GM12878 (cell line): ENCODE measurements at regions of chr6 and their contacts with region 1.

Region 1: DNA sequence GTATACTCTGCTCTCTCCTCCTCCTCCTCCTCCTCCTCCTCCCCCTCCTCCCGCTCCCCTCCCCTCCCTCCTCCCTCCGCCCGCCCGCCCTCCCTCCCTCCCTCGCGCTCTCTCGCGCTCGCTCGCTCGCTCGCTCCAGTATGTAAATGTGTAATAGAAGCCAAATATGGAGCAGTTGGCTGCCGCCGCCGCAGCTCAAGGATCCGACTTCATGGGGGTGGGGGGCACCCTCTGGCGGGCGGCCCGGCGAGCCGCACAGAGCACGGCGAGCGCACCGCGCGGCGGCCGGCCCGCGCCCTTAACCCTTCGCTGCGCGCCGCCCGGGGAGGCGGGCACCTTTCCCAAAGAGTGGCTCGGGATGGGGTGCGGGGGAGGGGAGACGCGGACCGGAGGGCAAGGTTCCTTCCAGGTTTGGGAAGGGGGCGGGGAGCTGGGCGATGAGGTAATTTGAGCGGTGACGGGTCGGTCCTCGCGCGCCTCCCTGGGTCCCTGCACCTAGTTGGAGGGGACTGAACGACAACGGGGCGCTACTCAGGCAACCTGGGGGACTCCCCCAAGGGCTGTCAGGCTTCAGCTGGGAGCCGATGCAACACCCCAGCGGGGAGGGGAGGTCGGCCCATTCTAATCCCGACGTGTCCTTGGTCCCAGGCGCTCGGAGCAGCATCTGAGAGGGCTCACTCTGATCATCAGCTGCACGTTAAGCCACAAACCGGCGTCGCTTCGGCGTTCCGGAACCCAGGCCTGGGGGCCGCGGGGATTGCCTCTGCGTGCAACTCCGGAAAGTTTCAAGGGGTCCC is 409 bp upstream of the ATXN1 start:
- DNase-seq: no peak
- ATAC-seq: peak; percentile 64
- H3K4me3 ChIP-seq: peak overlapping the region; percentile 80
- H3K27ac ChIP-seq: peak overlapping the region; percentile 68
- H3K4me1 ChIP-seq: peaks cover 8% of the 10 kb centered on the region; the same call in 1 of the 2 replicates
- H3K27me3 ChIP-seq: no peaks in the 10 kb centered on the region
- CTCF ChIP-seq: peak; percentile 24 to 48 (median 41); a peak in 3 of 6 replicates
- EP300 ChIP-seq: no peak; a peak in 1 of 4 replicates
- POLR2A ChIP-seq: peak; percentile 68
- RAD21 ChIP-seq: peak; percentile 64

Region 2: DNA sequence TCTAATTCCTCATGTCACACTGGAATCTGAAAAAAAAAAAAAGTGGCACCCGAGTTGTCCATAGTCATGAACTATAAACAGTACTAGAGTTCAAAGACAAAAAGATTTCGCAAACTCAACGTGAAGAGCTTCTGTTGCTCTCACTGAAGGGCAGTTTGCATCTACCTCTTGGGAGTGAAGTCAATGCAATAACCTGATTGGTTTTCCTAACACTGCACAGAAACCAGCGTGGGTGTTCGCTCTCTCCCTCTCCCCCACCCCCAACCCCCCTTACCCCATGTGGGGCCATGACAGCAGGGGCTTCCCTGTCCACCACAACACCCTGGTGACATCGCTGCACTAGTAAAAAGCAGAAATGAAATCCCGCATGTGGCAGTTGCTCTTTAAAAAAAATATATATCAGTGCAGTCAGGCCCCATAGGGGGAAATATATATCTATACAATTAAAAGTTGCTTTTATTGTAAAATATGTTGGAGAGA is 456.4 kb before region 1 on chr6:
- CTCF ChIA-PET with region 1: interaction called, 9 read pairs
- POLR2A ChIA-PET with region 1: no interaction called
- RAD21 ChIA-PET with region 1: interaction called, 4 read pairs
- SMC1A ChIA-PET with region 1: interaction called, 4 read pairs
- in situ Hi-C with region 1: no loop called
- intact Hi-C with region 1: loop called (anchors 10 kb)
- DNase-seq: peak; percentile 83
- ATAC-seq: peak; percentile 90
- H3K4me3 ChIP-seq: peak overlapping the region; percentile 53; the same call in 1 of the 2 replicates
- H3K27ac ChIP-seq: peak overlapping the region; percentile 75
- H3K4me1 ChIP-seq: peaks cover 32% of the 10 kb centered on the region
- H3K27me3 ChIP-seq: no peaks in the 10 kb centered on the region
- CTCF ChIP-seq: no peak
- EP300 ChIP-seq: peak; percentile 83 to 88
- POLR2A ChIP-seq: no peak
- RAD21 ChIP-seq: no peak

Region 3: DNA sequence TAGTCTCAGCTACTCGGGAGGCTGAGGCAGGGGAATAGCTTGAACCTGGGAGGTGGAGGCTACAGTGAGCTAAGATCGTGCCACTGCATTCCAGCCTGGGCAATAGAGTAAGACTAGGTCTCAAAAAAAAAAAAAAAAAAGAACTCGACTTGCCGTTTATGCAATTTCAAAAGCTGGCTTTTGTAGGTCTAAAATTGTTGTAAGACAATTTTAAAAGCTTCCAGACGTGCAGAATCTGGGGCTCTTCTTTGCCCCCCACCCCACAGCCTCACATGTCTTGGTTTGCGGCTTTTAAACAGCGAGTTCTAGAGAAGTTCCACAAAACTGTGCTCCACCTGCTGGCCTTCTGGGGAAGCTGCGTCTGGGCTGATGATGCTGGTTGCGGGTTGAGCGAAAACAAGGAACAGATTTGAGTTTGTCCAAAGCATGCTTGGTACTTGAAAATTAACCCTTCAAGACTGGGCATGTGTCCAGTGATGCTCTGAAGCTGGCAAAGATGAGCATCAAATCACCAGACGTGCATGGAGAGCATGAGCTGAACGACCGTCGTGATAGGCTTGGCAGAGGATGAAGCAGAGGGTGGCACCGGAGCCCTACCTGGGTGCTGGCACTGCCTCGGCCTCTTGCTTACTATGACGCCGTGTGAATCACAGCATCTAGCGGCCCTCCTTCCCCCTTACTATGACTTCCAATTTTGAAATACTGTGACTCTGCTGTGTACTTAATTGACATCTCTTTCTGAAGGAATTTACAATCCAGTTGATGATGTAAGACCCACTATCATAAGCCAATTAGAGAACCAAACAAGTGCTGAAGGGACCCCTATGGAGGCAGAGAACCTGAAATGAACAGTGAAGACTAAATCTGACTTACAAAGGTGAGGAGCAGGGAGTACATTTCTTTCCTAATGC is 351.9 kb before region 1 on chr6:
- CTCF ChIA-PET with region 1: interaction called, 25 read pairs
- POLR2A ChIA-PET with region 1: interaction called, 3 read pairs
- RAD21 ChIA-PET with region 1: interaction called, 37 read pairs
- SMC1A ChIA-PET with region 1: interaction called, 15 read pairs
- in situ Hi-C with region 1: loop called (anchors 10 kb)
- intact Hi-C with region 1: loop called (anchors 2 kb)
- DNase-seq: no peak
- ATAC-seq: peak; percentile 40
- H3K4me3 ChIP-seq: no peak overlapping the region
- H3K27ac ChIP-seq: no peak overlapping the region
- H3K4me1 ChIP-seq: peaks cover 11% of the 10 kb centered on the region
- H3K27me3 ChIP-seq: no peaks in the 10 kb centered on the region
- CTCF ChIP-seq: peak; percentile 60 to 86 (median 83)
- EP300 ChIP-seq: no peak
- POLR2A ChIP-seq: no peak
- RAD21 ChIP-seq: peak; percentile 79

Region 4: GRCh38 chr6:16494793-16495192 is 266.9 kb before region 1 on chr6:
- CTCF ChIA-PET with region 1: interaction called, 14 read pairs
- POLR2A ChIA-PET with region 1: interaction called, 6 read pairs
- RAD21 ChIA-PET with region 1: interaction called, 15 read pairs
- SMC1A ChIA-PET with region 1: interaction called, 12 read pairs
- in situ Hi-C with region 1: no loop called
- intact Hi-C with region 1: loop called (anchors 5 kb)
- DNase-seq: peak; percentile 90
- ATAC-seq: peak; percentile 75
- H3K4me3 ChIP-seq: peak overlapping the region; percentile 3; the same call in 1 of the 2 replicates
- H3K27ac ChIP-seq: peak overlapping the region; percentile 85
- H3K4me1 ChIP-seq: peaks cover 60% of the 10 kb centered on the region
- H3K27me3 ChIP-seq: no peaks in the 10 kb centered on the region
- CTCF ChIP-seq: no peak
- EP300 ChIP-seq: peak in 1 of 2 experiments; percentile 87; a peak in 3 of 4 replicates
- POLR2A ChIP-seq: no peak
- RAD21 ChIP-seq: no peak

Region 5: GRCh38 chr6:16602035-16602434 is 159.6 kb before region 1 on chr6:
- CTCF ChIA-PET with region 1: interaction called, 4 read pairs
- POLR2A ChIA-PET with region 1: interaction called, 3 read pairs
- RAD21 ChIA-PET with region 1: interaction called, 8 read pairs
- SMC1A ChIA-PET with region 1: interaction called, 11 read pairs
- in situ Hi-C with region 1: no loop called
- intact Hi-C with region 1: no loop called
- DNase-seq: peak; percentile 53
- ATAC-seq: peak; percentile 94
- H3K4me3 ChIP-seq: no peak overlapping the region
- H3K27ac ChIP-seq: no peak overlapping the region
- H3K4me1 ChIP-seq: peaks cover 32% of the 10 kb centered on the region
- H3K27me3 ChIP-seq: no peaks in the 10 kb centered on the region
- CTCF ChIP-seq: no peak
- EP300 ChIP-seq: peak; percentile 34 to 69; a peak in 2 of 4 replicates
- POLR2A ChIP-seq: no peak
- RAD21 ChIP-seq: no peak

Region 6: DNA sequence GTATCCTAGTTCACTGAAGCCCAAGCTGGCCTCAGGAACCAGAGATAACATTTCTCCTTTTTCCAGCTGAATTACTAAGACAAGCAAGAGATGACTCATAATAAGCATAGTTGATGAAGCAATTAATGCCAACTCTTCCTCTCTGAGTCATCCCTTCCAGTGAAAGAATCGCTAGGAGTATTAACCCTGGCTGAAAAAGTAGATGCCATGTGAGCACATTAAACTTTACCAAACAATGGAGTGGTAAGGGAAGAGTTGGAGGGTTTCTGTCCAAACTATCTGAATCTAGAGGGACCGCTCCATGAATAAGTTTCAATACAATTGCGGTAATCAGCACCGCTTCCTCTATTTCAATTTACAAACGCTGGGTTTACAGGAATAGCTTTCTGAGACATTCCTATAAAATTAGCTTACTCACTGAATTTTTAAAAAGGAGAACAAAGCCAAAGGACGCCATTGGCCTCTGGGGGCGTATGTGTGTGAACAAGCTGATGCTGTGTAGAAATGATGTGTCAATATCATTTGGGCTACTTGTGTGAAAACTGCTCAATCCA is 48.7 kb before region 1 on chr6:
- CTCF ChIA-PET with region 1: interaction called, 28 read pairs
- POLR2A ChIA-PET with region 1: interaction called, 5 read pairs
- RAD21 ChIA-PET with region 1: interaction called, 8 read pairs
- SMC1A ChIA-PET with region 1: interaction called, 8 read pairs
- in situ Hi-C with region 1: no loop called
- intact Hi-C with region 1: loop called (anchors 5 kb)
- DNase-seq: no peak
- ATAC-seq: peak; percentile 71
- H3K4me3 ChIP-seq: no peak overlapping the region
- H3K27ac ChIP-seq: peak overlapping the region; percentile 40; the same call in 1 of the 2 replicates
- H3K4me1 ChIP-seq: peaks cover 18% of the 10 kb centered on the region
- H3K27me3 ChIP-seq: no peaks in the 10 kb centered on the region
- CTCF ChIP-seq: peak; percentile 25 to 56 (median 50)
- EP300 ChIP-seq: peak in 1 of 2 experiments; percentile 66; a peak in 1 of 4 replicates
- POLR2A ChIP-seq: no peak
- RAD21 ChIP-seq: peak; percentile 50

Region 7: GRCh38 chr6:16872543-16873235 is 111.0 kb after region 1 on chr6:
- CTCF ChIA-PET with region 1: interaction called, 11 read pairs
- POLR2A ChIA-PET with region 1: no interaction called
- RAD21 ChIA-PET with region 1: interaction called, 6 read pairs
- SMC1A ChIA-PET with region 1: interaction called, 17 read pairs
- in situ Hi-C with region 1: no loop called
- intact Hi-C with region 1: no loop called
- DNase-seq: no peak
- ATAC-seq: peak; percentile 40; the same call in 1 of the 3 replicates
- H3K4me3 ChIP-seq: no peak overlapping the region
- H3K27ac ChIP-seq: no peak overlapping the region
- H3K4me1 ChIP-seq: no peaks in the 10 kb centered on the region
- H3K27me3 ChIP-seq: no peaks in the 10 kb centered on the region; a peak in 1 of 4 replicates
- CTCF ChIP-seq: peak; percentile 28 to 34 (median 31); a peak in 2 of 6 replicates
- EP300 ChIP-seq: no peak
- POLR2A ChIP-seq: no peak
- RAD21 ChIP-seq: peak; percentile 50

Region 8: DNA sequence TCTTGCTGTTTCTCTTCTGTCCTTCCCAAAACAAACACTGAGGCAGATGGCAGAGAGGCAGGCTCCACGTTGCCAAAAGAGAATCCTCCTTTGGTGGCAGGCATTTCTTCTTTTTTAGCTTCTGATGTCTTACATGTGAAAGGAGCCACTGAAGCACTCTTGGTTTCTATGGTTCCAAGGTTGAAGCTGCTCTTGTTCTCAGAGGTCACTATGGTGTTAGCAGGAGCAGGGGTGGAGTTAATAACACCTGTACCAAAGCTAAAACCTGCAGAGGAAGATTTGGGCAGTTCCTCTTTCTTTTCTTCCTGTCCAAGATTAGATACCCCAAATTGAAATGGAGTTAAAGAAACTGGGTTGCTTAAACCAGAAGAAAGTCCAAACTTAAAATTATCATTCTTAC is 867.2 kb after region 1 on chr6:
- CTCF ChIA-PET with region 1: no interaction called
- POLR2A ChIA-PET with region 1: no interaction called
- RAD21 ChIA-PET with region 1: no interaction called
- SMC1A ChIA-PET with region 1: no interaction called
- in situ Hi-C with region 1: no loop called
- intact Hi-C with region 1: no loop called
- DNase-seq: no peak
- ATAC-seq: peak; percentile 31; the same call in 1 of the 3 replicates
- H3K4me3 ChIP-seq: no peak overlapping the region
- H3K27ac ChIP-seq: no peak overlapping the region
- H3K4me1 ChIP-seq: peaks cover 12% of the 10 kb centered on the region; the same call in 1 of the 2 replicates
- H3K27me3 ChIP-seq: no peaks in the 10 kb centered on the region
- CTCF ChIP-seq: no peak
- EP300 ChIP-seq: no peak
- POLR2A ChIP-seq: no peak
- RAD21 ChIP-seq: no peak